ENCODE measurements at regions of chr20 and their contacts with region 1.

Region 1: GRCh38 chr20:21235484-21236445 is 67.4 kb upstream of the XRN2 start:
- DNase-seq: peak; percentile 47
- H3K27ac ChIP-seq: no peak overlapping the region
- CTCF ChIP-seq: peak; percentile 97

Region 2: DNA sequence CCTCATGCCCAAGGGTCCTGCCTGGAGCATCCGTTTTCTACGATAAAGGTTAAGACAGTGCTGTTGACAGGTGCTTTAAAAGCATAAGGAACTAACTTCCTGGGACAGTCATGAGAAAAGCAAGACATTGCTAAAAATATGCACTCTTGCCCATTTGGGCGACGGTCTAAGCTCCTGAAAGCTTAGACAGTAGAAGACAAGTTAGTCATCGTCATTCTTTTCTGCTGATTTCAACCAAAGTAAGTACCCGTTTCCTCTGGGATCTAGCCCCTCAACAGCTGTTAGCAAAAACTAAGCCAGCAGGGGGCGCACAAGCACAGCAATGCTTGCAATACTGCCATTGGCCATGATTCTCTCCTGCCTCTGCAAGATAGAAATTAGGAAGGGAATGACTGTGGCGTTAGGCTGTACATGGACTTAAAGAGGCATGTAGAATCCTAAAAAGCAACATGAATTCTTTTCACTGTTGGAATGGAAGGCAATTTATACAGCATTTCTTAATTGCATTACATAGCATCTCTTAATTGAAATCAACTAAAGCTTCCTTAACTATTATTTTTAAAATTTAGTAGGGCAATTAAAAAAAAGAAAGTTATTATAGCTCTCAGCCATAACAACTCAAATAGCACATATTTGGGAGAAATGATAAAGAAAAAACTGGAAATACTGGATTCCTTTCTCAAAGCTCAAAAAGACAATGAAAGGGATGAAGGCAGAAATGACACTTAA is 375.5 kb before region 1 on chr20:
- CTCF ChIA-PET with region 1: interaction called, 15 read pairs
- POLR2A ChIA-PET with region 1: no interaction called
- DNase-seq: peak; percentile 80
- H3K27ac ChIP-seq: no peak overlapping the region
- CTCF ChIP-seq: peak; percentile 95

Region 3: DNA sequence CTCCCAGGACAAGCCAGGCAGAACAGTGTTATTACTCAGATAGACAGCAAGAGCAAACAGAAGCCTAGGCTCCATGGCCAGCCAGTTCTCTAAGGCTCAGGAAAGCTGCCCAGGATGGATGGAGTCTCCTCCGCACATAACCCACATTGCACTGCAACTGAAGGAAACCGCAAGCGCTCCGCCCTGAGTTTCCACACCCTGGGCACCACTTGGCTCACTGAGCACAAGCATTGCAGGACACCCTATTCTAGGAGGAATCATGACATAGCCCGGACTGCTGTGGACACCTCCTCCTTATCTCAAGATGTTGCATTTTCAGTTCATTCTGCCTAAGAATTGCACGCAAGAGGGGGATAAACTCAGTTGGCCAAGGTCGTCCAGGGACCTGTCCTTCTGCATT is 172.5 kb before region 1 on chr20:
- CTCF ChIA-PET with region 1: no interaction called
- POLR2A ChIA-PET with region 1: no interaction called
- DNase-seq: no peak
- H3K27ac ChIP-seq: no peak overlapping the region
- CTCF ChIP-seq: no peak

Region 4: GRCh38 chr20:21182832-21183563 is 52.8 kb before region 1 on chr20:
- CTCF ChIA-PET with region 1: no interaction called
- POLR2A ChIA-PET with region 1: no interaction called
- DNase-seq: peak; percentile 66
- H3K27ac ChIP-seq: peak overlapping the region; percentile 82
- CTCF ChIP-seq: no peak

Region 5: DNA sequence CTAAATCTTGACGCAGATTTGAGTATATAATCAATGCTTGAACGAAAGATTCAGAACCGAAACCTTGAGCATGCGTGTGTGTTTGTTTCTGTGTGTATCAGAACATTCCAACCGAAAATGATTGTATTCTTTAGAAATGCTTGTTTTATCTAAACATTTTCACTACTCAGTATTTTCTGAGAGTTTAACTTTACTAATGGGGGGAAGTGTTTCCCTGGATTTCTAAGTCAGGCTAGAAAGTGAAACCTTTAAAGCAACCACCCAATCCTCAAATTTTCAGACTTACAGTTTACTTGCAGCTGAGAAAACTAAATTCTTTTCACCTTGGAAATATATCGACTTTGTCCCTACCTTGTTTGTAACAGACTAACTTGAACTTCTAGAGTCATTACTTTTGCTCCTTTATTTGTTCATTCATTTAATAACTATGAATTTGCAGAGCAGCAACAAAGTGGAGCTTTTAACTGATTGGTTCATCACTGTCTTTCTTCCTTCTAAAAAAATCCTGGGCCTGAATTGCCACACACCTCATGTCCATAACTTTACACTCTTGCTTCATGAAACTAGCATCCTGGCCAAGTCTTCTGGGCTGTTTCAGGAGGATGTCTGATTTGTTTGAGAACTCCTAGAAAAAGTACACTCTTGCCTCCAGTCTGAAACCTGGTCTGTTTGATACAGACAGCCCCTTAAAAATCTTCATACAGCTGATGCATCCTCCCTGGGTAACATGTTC is 10.4 kb before region 1 on chr20:
- CTCF ChIA-PET with region 1: interaction called, 11 read pairs
- POLR2A ChIA-PET with region 1: no interaction called
- DNase-seq: no peak
- H3K27ac ChIP-seq: no peak overlapping the region
- CTCF ChIP-seq: no peak

Measured in RWPE1 (cell line).